T-cell (primary cell): ENCODE measurements at regions of chr19 and their contacts with region 1.

Region 1: DNA sequence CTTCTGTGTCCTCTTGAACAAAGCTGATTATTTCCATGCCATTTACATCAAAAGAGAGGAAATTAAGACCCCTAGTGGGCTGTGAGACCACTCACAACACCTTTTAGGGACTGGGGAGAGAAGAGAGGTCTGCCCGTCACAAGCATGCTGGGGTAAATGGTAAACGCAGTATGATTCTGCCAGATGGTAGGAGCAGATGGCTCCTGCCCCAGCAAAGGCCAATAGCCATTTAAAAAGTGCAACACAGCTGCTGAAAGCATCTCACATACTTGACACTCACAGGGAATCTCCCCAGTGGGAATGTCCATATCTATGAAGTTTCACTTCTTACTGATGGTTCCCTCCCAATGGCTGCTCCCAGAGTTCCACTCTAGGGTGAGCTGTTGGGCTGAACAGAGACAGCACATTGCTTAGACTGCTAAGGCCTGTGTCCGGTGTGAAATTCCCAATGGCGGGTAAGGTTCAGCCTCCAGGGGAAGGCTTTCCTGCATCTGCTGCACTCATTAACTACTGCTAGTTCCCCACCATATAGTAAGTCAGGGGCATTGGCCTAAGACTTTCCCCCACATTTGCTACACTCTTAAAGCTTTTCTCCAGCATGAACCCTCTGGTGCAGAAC is 7.4 kb downstream of the ZNF671 start:
- DNase-seq: no peak
- ATAC-seq: no peak
- H3K4me3 ChIP-seq: peak overlapping the region in 1 of 2 donors; percentile 42
- H3K4me3 Mint-ChIP-seq: no peak overlapping the region
- H3K27ac ChIP-seq: no peak overlapping the region
- H3K27ac Mint-ChIP-seq: no peak overlapping the region
- H3K4me1 ChIP-seq: no peaks in the 10 kb centered on the region
- H3K4me1 Mint-ChIP-seq: peaks cover 5 to 12% (median 6%) of the 10 kb centered on the region in 3 donors
- H3K27me3 ChIP-seq: no peaks in the 10 kb centered on the region
- H3K27me3 Mint-ChIP-seq: no peaks in the 10 kb centered on the region

Region 2: DNA sequence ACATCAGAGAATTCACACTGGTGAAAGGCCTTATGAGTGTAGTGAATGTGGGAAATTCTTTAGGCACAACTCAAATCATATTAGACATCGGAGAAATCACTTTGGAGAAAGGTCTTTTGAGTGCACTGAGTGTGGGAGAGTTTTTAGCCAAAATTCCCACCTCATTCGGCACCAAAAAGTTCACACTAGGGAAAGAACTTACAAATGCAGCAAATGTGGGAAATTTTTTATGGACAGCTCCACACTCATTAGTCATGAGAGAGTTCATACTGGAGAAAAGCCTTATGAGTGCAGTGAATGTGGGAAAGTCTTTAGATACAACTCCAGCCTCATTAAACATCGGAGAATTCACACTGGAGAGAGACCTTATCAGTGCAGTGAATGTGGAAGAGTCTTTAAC is 299.0 kb before region 1 on chr19:
- CTCF ChIA-PET with region 1: no interaction called
- POLR2A ChIA-PET with region 1: interaction called in 1 of 2 experiments, 12 read pairs
- DNase-seq: no peak
- ATAC-seq: no peak
- H3K4me3 ChIP-seq: no peak overlapping the region
- H3K4me3 Mint-ChIP-seq: no peak overlapping the region
- H3K27ac ChIP-seq: no peak overlapping the region
- H3K27ac Mint-ChIP-seq: no peak overlapping the region
- H3K4me1 ChIP-seq: no peaks in the 10 kb centered on the region
- H3K4me1 Mint-ChIP-seq: peaks cover 0 to 8% (median 0%) of the 10 kb centered on the region in 3 donors
- H3K27me3 ChIP-seq: no peaks in the 10 kb centered on the region
- H3K27me3 Mint-ChIP-seq: no peaks in the 10 kb centered on the region

Region 3: DNA sequence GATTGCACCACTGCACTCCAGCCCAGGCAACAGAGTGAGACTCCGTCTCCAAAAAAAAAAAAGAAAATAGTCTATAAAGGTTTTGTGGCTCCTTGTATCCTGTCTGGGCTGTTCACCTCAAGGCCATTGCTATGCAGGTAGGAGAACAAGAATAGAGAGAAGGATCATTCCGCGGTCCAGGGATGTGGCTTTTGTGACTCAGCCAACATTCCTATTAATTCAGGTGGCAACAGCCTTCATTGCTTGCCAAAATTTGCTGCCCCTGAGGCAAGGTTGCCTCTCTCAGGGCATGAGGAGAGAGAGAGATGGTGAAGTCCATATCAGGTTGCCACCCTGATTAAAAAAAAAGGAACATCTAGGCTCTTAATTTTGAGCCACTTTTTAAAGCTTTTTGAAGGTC is 30.3 kb before region 1 on chr19:
- CTCF ChIA-PET with region 1: no interaction called
- POLR2A ChIA-PET with region 1: no interaction called
- DNase-seq: no peak
- ATAC-seq: no peak
- H3K4me3 ChIP-seq: no peak overlapping the region
- H3K4me3 Mint-ChIP-seq: no peak overlapping the region
- H3K27ac ChIP-seq: no peak overlapping the region
- H3K27ac Mint-ChIP-seq: no peak overlapping the region
- H3K4me1 ChIP-seq: no peaks in the 10 kb centered on the region
- H3K4me1 Mint-ChIP-seq: peaks cover 0 to 4% (median 3%) of the 10 kb centered on the region in 3 donors
- H3K27me3 ChIP-seq: no peaks in the 10 kb centered on the region
- H3K27me3 Mint-ChIP-seq: no peaks in the 10 kb centered on the region